ENCODE measurements at regions of chr5 and their contacts with region 1.

Region 1: GRCh38 chr5:33588654-33589372 is 148.0 kb downstream of the TARS1 start:
- DNase-seq: peak in 4 of 5 donors; percentile 9 to 21 (median 13)
- H3K4me3 ChIP-seq: no peak overlapping the region
- H3K4me3 Mint-ChIP-seq: no peak overlapping the region
- H3K27ac ChIP-seq: no peak overlapping the region
- H3K27ac Mint-ChIP-seq: no peak overlapping the region
- H3K4me1 ChIP-seq: no peaks in the 10 kb centered on the region
- H3K4me1 Mint-ChIP-seq: no peaks in the 10 kb centered on the region
- H3K27me3 ChIP-seq: no peaks in the 10 kb centered on the region
- H3K27me3 Mint-ChIP-seq: peaks cover 0 to 5% of the 10 kb centered on the region in 2 donors

Region 2: GRCh38 chr5:33537240-33537639 is 51.6 kb before region 1 on chr5:
- CTCF ChIA-PET with region 1: no interaction called
- POLR2A ChIA-PET with region 1: no interaction called
- intact Hi-C with region 1: no loop called
- DNase-seq: no peak
- H3K4me3 ChIP-seq: no peak overlapping the region
- H3K4me3 Mint-ChIP-seq: no peak overlapping the region
- H3K27ac ChIP-seq: no peak overlapping the region
- H3K27ac Mint-ChIP-seq: no peak overlapping the region
- H3K4me1 ChIP-seq: no peaks in the 10 kb centered on the region
- H3K4me1 Mint-ChIP-seq: no peaks in the 10 kb centered on the region
- H3K27me3 ChIP-seq: no peaks in the 10 kb centered on the region
- H3K27me3 Mint-ChIP-seq: peaks cover 8 to 11% of the 10 kb centered on the region in 2 donors

Region 3: GRCh38 chr5:33576726-33577590 is 11.9 kb before region 1 on chr5:
- CTCF ChIA-PET with region 1: interaction called, 10 read pairs
- POLR2A ChIA-PET with region 1: no interaction called
- intact Hi-C with region 1: no loop called
- DNase-seq: no peak
- H3K4me3 ChIP-seq: no peak overlapping the region
- H3K4me3 Mint-ChIP-seq: no peak overlapping the region
- H3K27ac ChIP-seq: no peak overlapping the region
- H3K27ac Mint-ChIP-seq: no peak overlapping the region
- H3K4me1 ChIP-seq: no peaks in the 10 kb centered on the region
- H3K4me1 Mint-ChIP-seq: no peaks in the 10 kb centered on the region
- H3K27me3 ChIP-seq: no peaks in the 10 kb centered on the region
- H3K27me3 Mint-ChIP-seq: peaks cover 2 to 5% of the 10 kb centered on the region in 2 donors

Region 4: GRCh38 chr5:33601881-33602280 is 13.1 kb after region 1 on chr5:
- CTCF ChIA-PET with region 1: interaction called, 13 read pairs
- POLR2A ChIA-PET with region 1: no interaction called
- intact Hi-C with region 1: no loop called
- DNase-seq: no peak
- H3K4me3 ChIP-seq: no peak overlapping the region
- H3K4me3 Mint-ChIP-seq: no peak overlapping the region
- H3K27ac ChIP-seq: no peak overlapping the region
- H3K27ac Mint-ChIP-seq: no peak overlapping the region
- H3K4me1 ChIP-seq: no peaks in the 10 kb centered on the region
- H3K4me1 Mint-ChIP-seq: no peaks in the 10 kb centered on the region
- H3K27me3 ChIP-seq: no peaks in the 10 kb centered on the region
- H3K27me3 Mint-ChIP-seq: peaks cover 1 to 2% of the 10 kb centered on the region in 2 donors

Region 5: DNA sequence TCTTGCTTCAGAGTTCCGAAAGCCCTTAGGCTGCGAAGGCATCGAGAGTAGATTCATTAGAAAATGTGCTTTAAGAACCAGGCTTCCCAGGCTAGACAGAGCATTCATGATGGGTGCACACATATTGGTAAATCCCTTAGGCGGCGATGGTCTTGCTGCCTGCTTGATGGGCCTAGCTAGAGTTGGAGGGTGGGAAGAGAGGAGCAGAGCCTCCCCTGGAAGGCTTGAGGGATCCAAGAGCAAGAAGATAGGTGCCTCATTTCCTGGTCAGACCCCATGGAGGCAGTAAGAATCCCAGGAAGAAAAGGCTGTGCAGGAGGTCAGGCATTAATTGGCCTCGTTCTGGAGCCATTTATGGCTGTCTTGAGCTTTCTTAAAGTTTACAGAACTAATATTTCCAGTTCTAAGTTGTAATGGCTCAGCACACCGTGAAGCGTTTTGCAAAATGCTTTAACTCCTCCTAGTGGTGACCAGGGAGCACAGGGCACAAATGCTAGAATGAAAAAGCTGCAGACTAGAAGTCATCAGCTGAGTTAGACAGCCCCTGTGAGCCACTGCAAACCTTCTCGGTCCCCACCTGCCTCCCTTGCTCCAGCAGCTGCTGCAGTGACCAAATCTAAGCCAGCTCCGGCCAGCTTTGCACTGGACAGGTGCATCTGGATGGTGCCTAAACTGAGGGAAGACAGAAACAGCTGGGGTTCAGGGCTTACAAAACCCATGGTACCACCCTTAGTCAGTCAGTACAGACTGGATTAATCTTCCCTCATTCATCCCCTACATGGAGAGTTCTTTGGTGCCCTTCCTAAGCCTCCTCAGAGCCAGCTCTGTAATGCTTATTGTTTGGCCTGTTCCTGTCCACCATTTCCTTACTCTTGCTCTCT is 381.0 kb after region 1 on chr5:
- CTCF ChIA-PET with region 1: interaction called, 10 read pairs
- POLR2A ChIA-PET with region 1: no interaction called
- intact Hi-C with region 1: no loop called
- DNase-seq: peak in 4 of 5 donors; percentile 8 to 20 (median 12)
- H3K4me3 ChIP-seq: no peak overlapping the region
- H3K4me3 Mint-ChIP-seq: no peak overlapping the region
- H3K27ac ChIP-seq: no peak overlapping the region
- H3K27ac Mint-ChIP-seq: peak overlapping the region in 1 of 7 donors; percentile 35
- H3K4me1 ChIP-seq: no peaks in the 10 kb centered on the region
- H3K4me1 Mint-ChIP-seq: peaks cover 2 to 12% (median 7%) of the 10 kb centered on the region in 4 donors
- H3K27me3 ChIP-seq: no peaks in the 10 kb centered on the region
- H3K27me3 Mint-ChIP-seq: no peaks in the 10 kb centered on the region